WTC11 (cell line): ENCODE measurements at regions of chr2 and their contacts with region 1.

Region 1: DNA sequence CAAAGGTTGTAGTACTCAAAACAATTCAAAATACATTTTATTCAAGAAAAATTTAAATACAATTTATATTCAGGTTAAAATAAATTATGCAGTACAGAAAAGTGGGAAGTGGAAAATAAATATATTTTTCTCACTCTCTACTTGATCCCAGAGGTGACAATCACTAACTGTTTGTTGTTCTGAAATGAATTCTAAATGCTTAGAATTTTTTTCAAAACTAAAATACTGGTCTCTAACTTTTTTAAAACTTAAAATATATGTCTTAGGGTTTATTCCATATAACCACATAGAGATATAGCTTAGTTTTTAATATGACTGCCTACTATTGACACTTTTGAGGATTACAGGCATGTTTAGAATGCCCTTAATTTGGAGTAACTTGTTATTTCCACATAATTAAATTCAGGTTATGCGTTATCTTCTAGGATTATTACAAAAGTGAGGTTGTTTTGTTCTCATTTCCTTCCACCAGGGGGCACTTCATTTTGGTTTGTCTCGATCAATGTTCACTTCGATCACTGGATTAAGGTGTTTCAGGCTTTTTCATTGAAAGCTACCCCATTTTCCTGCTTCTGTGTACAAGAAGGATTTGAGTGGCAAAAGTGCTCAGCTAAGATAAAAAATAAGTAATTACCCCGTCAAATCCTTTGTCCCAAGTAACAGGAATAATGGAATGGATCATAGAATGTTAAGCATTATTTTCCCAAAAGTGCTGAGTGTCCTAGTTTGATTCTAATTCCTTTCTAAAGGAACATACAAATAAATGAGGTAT is 27.1 kb upstream of the TFPI start:
- DNase-seq: no peak
- ATAC-seq: no peak
- H3K4me3 Mint-ChIP-seq: no peak overlapping the region
- H3K27ac Mint-ChIP-seq: no peak overlapping the region
- H3K4me1 Mint-ChIP-seq: peaks cover 16% of the 10 kb centered on the region
- H3K27me3 Mint-ChIP-seq: no peaks in the 10 kb centered on the region; the same call in 1 of the 2 replicates
- CTCF ChIP-seq: peak; percentile 80

Region 2: GRCh38 chr2:187567126-187567525 is 14.2 kb before region 1 on chr2:
- CTCF ChIA-PET with region 1: interaction called, 14 read pairs
- POLR2A ChIA-PET with region 1: no interaction called
- DNase-seq: no peak
- ATAC-seq: peak; percentile 44
- H3K4me3 Mint-ChIP-seq: no peak overlapping the region
- H3K27ac Mint-ChIP-seq: peak overlapping the region; percentile 18; the same call in 1 of the 2 replicates
- H3K4me1 Mint-ChIP-seq: peaks cover 31% of the 10 kb centered on the region
- H3K27me3 Mint-ChIP-seq: no peaks in the 10 kb centered on the region
- CTCF ChIP-seq: no peak

Region 3: DNA sequence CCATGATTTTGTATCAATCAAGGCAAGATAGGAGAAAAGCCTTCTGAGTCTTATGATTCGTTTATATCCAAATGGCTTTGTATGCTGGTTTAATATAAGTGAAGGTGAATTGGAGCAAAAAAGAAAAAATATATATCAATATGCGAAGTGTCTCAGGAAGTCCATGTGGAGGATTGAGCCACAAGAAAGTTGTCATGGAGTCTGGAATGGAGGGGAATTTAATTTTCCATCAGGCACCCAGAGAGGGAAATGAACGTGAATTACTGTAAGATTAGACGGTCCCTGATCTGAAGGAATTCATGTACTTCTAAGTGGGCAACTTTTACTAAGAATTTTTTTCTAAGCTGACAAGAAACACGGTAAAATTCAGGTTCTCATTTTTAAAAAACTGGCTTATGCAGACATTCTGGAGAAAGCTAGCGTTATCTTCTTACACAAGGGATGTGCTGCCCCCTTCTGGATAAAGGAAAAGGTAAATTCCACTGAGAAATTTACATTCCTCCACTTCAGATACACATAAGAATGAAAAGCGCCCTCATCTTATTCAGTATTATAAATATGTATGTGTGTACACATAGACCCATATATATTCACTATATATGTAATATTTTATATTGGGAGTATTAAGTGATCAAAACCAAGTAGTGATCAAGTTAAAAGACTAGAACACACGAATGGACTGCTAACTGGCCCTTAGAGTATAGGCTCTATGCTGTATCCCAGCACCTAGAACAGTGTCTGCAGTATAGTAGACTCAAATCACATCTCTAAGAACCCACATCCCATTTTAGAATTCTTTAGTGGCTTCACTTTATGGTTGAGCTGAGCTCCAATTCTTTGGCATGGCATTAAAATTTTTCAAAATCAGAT is 261.9 kb after region 1 on chr2:
- CTCF ChIA-PET with region 1: interaction called, 17 read pairs
- POLR2A ChIA-PET with region 1: no interaction called
- DNase-seq: no peak
- ATAC-seq: peak; percentile 80
- H3K4me3 Mint-ChIP-seq: no peak overlapping the region
- H3K27ac Mint-ChIP-seq: no peak overlapping the region
- H3K4me1 Mint-ChIP-seq: peaks cover 3% of the 10 kb centered on the region; the same call in 1 of the 2 replicates
- H3K27me3 Mint-ChIP-seq: 0 out of 2 replicates have a peak, but pooled peaks cover 2% of the 10 kb centered on the region
- CTCF ChIP-seq: peak; percentile 58